CD4-positive, alpha-beta memory T cell (primary cell): ENCODE measurements at regions of chr2 and their contacts with region 1.

Region 1: GRCh38 chr2:189412330-189412953 is 28.8 kb upstream of the WDR75 start:
- DNase-seq: peak in 4 of 5 donors; percentile 44 to 54 (median 46)
- H3K4me3 ChIP-seq: no peak overlapping the region
- H3K4me3 Mint-ChIP-seq: no peak overlapping the region
- H3K27ac ChIP-seq: no peak overlapping the region
- H3K27ac Mint-ChIP-seq: no peak overlapping the region
- H3K4me1 ChIP-seq: no peaks in the 10 kb centered on the region
- H3K4me1 Mint-ChIP-seq: peaks cover 7 to 9% (median 9%) of the 10 kb centered on the region in 4 donors
- H3K27me3 ChIP-seq: no peaks in the 10 kb centered on the region
- H3K27me3 Mint-ChIP-seq: no peaks in the 10 kb centered on the region

Region 2: DNA sequence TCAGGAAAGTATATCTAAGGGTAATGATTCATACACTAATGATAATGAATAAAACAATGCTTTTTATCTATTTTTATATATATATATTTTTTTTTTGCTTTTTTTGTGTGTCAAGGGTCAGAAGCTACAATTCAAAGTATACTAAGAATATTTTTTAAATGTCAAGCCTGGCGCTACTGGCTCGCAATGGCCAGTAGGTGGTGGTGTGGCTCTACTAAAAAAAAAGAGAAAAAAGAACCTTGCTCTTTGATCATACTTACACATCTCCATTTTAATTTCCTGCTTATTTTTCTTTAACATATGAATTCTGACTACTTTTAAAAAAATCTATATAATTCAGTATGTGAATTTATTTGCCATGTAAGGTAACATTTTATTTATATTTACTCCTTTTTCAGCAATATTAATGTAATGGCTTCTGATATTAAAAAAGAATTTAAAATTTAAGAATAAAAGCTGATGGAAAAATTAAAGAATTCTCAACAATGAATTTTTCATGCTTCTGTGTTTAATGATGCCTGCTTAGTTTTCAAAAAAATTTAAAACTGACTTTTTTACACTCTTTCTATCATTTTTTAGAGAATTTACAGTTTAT is 887.8 kb before region 1 on chr2:
- CTCF ChIA-PET with region 1: no interaction called
- POLR2A ChIA-PET with region 1: no interaction called
- intact Hi-C with region 1: loop called (anchors 2 kb)
- DNase-seq: peak in 4 of 5 donors; percentile 13 to 27 (median 23)
- H3K4me3 ChIP-seq: no peak overlapping the region
- H3K4me3 Mint-ChIP-seq: no peak overlapping the region
- H3K27ac ChIP-seq: no peak overlapping the region
- H3K27ac Mint-ChIP-seq: no peak overlapping the region
- H3K4me1 ChIP-seq: no peaks in the 10 kb centered on the region
- H3K4me1 Mint-ChIP-seq: no peaks in the 10 kb centered on the region
- H3K27me3 ChIP-seq: no peaks in the 10 kb centered on the region
- H3K27me3 Mint-ChIP-seq: no peaks in the 10 kb centered on the region

Region 3: DNA sequence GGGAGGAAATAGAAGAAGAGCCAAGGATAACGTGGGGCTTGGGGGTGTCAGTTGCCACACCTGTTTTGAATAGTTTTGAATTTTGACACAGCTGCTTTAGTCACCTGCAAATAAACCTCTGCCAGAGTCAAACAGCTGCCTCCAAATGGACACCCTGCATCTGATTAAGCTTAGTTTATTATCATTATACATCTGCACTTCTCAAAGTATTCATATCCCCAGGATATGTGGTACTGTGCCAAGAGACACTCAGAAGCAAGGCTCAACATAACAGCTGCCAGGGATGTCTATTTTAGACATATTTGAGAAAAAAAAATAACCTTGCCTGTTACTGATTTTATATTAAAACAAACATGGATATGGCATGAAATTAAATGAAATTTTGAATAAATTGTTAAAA is 93.7 kb before region 1 on chr2:
- CTCF ChIA-PET with region 1: no interaction called
- POLR2A ChIA-PET with region 1: no interaction called
- intact Hi-C with region 1: no loop called
- DNase-seq: no peak
- H3K4me3 ChIP-seq: no peak overlapping the region
- H3K4me3 Mint-ChIP-seq: no peak overlapping the region
- H3K27ac ChIP-seq: no peak overlapping the region
- H3K27ac Mint-ChIP-seq: no peak overlapping the region
- H3K4me1 ChIP-seq: peaks cover 6% of the 10 kb centered on the region
- H3K4me1 Mint-ChIP-seq: peaks cover 6 to 15% (median 6%) of the 10 kb centered on the region in 4 donors
- H3K27me3 ChIP-seq: no peaks in the 10 kb centered on the region
- H3K27me3 Mint-ChIP-seq: no peaks in the 10 kb centered on the region